CD8-positive, alpha-beta memory T cell (primary cell): ENCODE measurements at regions of chr1 and their contacts with region 1.

Region 1: GRCh38 chr1:206982216-206982615 is 12.0 kb upstream of the FCAMR start:
- DNase-seq: peak; percentile 32 to 65 (median 39)
- H3K4me3 ChIP-seq: no peak overlapping the region
- H3K4me3 Mint-ChIP-seq: no peak overlapping the region
- H3K27ac ChIP-seq: no peak overlapping the region
- H3K27ac Mint-ChIP-seq: no peak overlapping the region
- H3K4me1 ChIP-seq: no peaks in the 10 kb centered on the region
- H3K4me1 Mint-ChIP-seq: no peaks in the 10 kb centered on the region
- H3K27me3 ChIP-seq: no peaks in the 10 kb centered on the region
- H3K27me3 Mint-ChIP-seq: peaks cover 20 to 25% of the 10 kb centered on the region in 2 donors

Region 2: GRCh38 chr1:206635080-206635977 is 346.9 kb before region 1 on chr1 and contains the start of gene DYRK3:
- CTCF ChIA-PET with region 1: interaction called, 13 read pairs
- POLR2A ChIA-PET with region 1: no interaction called
- DNase-seq: peak; percentile 84 to 94 (median 87)
- H3K4me3 ChIP-seq: peak within 1 kb of the TSS; percentile 62
- H3K4me3 Mint-ChIP-seq: peak within 1 kb of the TSS; percentile 85 to 96 (median 89)
- H3K27ac ChIP-seq: peak within 1 kb of the TSS; percentile 59
- H3K27ac Mint-ChIP-seq: peak within 1 kb of the TSS; percentile 61 to 95 (median 90)
- H3K4me1 ChIP-seq: peaks cover 13% of the 10 kb centered on the region
- H3K4me1 Mint-ChIP-seq: peaks cover 13 to 27% (median 18%) of the 10 kb centered on the region in 3 donors
- H3K27me3 ChIP-seq: no peaks in the 10 kb centered on the region
- H3K27me3 Mint-ChIP-seq: peaks cover 10 to 13% of the 10 kb centered on the region in 2 donors
- total RNA-seq, gene DYRK3: 11.0 to 11.7 TPM

Region 3: DNA sequence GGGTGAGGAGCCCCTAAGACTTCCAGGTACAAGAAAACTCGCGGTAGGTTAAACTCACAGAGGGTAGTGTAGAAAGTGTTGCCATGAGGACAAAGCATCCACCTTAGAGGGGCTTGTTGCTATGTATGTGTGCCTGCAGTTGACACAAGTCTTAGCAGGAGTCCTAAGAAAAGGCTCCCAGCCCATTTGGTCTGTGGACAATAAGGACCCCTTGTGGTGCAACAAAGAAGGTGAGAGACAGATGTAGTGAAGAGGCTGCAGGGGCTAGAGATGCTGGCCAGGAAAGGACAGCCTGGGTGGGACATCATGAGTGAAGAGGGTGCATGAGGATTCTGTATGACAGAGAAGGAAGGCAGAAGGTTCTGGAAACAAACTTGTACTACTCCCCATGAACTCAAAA is 173.6 kb before region 1 on chr1:
- CTCF ChIA-PET with region 1: interaction called, 10 read pairs
- POLR2A ChIA-PET with region 1: no interaction called
- DNase-seq: peak; percentile 7 to 69 (median 67)
- H3K4me3 ChIP-seq: no peak overlapping the region
- H3K4me3 Mint-ChIP-seq: no peak overlapping the region
- H3K27ac ChIP-seq: no peak overlapping the region
- H3K27ac Mint-ChIP-seq: peak overlapping the region in 7 of 8 donors; percentile 9 to 85 (median 79)
- H3K4me1 ChIP-seq: peaks cover 38% of the 10 kb centered on the region
- H3K4me1 Mint-ChIP-seq: peaks cover 31 to 46% (median 43%) of the 10 kb centered on the region in 3 donors
- H3K27me3 ChIP-seq: no peaks in the 10 kb centered on the region
- H3K27me3 Mint-ChIP-seq: peaks cover 0 to 1% of the 10 kb centered on the region in 2 donors

Region 4: DNA sequence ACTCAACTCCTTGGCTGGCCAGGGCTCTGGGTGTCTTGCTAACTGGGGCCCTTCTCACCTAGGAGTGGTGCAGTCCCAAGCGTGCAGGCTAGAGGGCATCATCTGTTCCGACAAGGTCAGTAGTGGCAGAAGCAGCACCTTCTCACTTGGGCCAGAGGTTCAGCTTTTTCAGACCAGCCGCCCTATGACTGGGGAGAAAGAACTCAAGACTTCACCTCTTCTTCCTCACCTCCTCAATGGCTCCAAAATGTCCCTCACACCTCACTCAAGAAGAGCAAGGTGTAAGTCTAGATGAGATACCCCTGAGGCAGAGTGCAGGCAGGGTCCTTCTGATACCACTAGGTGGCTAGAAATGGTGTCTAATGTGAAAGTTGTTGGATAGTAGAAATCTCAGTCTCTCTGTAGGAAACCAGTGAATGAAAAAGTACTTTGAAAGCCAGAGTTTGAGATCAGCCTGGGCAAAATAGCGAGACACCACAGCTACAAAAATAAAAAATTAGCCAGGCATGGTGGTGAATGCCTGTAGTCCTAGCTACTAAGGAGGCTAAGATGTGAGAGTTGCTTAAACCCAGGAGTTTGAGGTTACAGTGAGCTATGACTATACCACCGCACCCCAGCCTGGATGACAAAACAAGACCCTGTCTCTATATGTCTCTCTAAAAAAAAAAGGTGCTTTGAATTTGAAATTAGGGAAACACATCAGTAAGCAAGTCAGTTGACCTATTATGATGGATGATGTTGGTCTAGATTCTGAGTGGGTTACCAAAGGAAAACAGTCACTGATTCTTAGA is 125.3 kb before region 1 on chr1:
- CTCF ChIA-PET with region 1: interaction called, 15 read pairs
- POLR2A ChIA-PET with region 1: no interaction called
- DNase-seq: peak in 1 of 5 donors; percentile 28
- H3K4me3 ChIP-seq: no peak overlapping the region
- H3K4me3 Mint-ChIP-seq: no peak overlapping the region
- H3K27ac ChIP-seq: no peak overlapping the region
- H3K27ac Mint-ChIP-seq: peak overlapping the region in 2 of 8 donors; percentile 13 to 14
- H3K4me1 ChIP-seq: peaks cover 9% of the 10 kb centered on the region
- H3K4me1 Mint-ChIP-seq: peaks cover 3 to 5% (median 3%) of the 10 kb centered on the region in 3 donors
- H3K27me3 ChIP-seq: no peaks in the 10 kb centered on the region
- H3K27me3 Mint-ChIP-seq: peaks cover 11 to 15% of the 10 kb centered on the region in 2 donors

Region 5: GRCh38 chr1:206865013-206865671 is 117.1 kb before region 1 on chr1 and contains the start of gene IL20:
- CTCF ChIA-PET with region 1: interaction called, 10 read pairs
- POLR2A ChIA-PET with region 1: no interaction called
- DNase-seq: peak; percentile 67 to 87 (median 79)
- H3K4me3 ChIP-seq: no peak within 1 kb of the TSS
- H3K4me3 Mint-ChIP-seq: no peak within 1 kb of the TSS
- H3K27ac ChIP-seq: no peak within 1 kb of the TSS
- H3K27ac Mint-ChIP-seq: no peak within 1 kb of the TSS
- H3K4me1 ChIP-seq: no peaks in the 10 kb centered on the region
- H3K4me1 Mint-ChIP-seq: peaks cover 0 to 5% (median 2%) of the 10 kb centered on the region in 3 donors
- H3K27me3 ChIP-seq: no peaks in the 10 kb centered on the region
- H3K27me3 Mint-ChIP-seq: peaks cover 17 to 25% of the 10 kb centered on the region in 2 donors
- total RNA-seq, gene IL20: not detected

Region 6: DNA sequence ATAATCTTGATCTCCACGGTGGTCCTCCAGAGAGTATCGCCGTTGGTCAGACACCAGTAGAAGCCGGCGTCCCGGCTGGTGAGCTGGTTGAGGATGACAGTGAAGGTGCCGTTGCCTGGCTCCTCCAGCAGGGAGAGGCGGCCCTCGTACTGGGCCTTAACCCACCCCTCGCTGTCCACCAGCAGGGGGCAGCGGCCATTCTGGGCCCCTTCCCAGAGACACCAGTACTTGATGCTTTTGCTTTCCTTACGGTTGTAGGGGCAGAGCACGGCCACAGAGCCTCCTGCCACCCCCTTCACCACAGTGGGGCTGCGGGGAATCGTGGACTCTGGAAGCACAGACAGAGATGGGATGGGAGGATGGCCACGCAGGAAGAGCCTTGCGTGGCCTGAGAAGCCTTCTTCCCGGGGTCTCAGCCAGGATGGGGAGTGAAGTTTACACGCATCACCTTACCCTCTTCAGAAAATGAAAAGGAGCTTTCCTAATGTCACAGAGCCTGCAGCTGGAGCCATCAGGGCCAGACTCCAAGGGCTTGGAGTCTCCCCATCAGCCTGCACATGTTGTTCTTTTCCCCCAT is 46.6 kb before region 1 on chr1:
- CTCF ChIA-PET with region 1: interaction called, 16 read pairs
- POLR2A ChIA-PET with region 1: no interaction called
- DNase-seq: peak in 3 of 5 donors; percentile 13 to 49 (median 18)
- H3K4me3 ChIP-seq: no peak overlapping the region
- H3K4me3 Mint-ChIP-seq: no peak overlapping the region
- H3K27ac ChIP-seq: no peak overlapping the region
- H3K27ac Mint-ChIP-seq: no peak overlapping the region
- H3K4me1 ChIP-seq: peaks cover 16% of the 10 kb centered on the region
- H3K4me1 Mint-ChIP-seq: peaks cover 18 to 25% (median 24%) of the 10 kb centered on the region in 3 donors
- H3K27me3 ChIP-seq: no peaks in the 10 kb centered on the region
- H3K27me3 Mint-ChIP-seq: peaks cover 0 to 4% of the 10 kb centered on the region in 2 donors

Region 7: DNA sequence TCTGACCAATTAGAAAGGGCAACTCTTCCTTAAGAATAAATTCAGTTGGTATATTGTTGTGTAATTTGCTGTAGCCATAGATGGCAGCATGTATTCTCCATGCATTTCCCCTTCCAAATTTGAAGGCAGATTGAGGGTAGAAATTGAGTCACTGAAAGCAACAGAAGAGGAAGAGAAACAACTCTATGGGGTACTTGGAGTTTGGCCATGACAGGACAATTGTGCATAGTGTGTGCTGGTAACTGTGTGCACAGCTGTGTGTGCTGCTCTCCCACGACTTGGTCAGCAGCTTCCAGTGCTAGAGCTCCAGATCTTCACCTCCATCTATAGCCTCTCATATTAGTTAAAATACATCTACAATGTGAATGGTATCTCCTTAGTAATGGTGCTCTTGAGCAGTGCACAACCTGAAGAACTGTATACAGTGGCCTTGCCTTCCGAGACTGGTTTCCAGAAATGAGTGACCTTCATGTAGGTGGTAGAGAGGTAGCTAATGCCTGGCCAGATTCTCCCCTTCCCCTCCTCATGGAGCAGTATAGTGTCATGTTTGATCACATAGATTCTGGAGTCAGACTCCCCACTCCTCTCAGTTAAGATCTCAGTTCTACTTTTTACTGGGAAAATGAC is 11.1 kb before region 1 on chr1:
- CTCF ChIA-PET with region 1: interaction called, 23 read pairs
- POLR2A ChIA-PET with region 1: no interaction called
- DNase-seq: no peak
- H3K4me3 ChIP-seq: no peak overlapping the region
- H3K4me3 Mint-ChIP-seq: no peak overlapping the region
- H3K27ac ChIP-seq: no peak overlapping the region
- H3K27ac Mint-ChIP-seq: no peak overlapping the region
- H3K4me1 ChIP-seq: peaks cover 12% of the 10 kb centered on the region
- H3K4me1 Mint-ChIP-seq: peaks cover 9 to 15% (median 13%) of the 10 kb centered on the region in 3 donors
- H3K27me3 ChIP-seq: no peaks in the 10 kb centered on the region
- H3K27me3 Mint-ChIP-seq: peaks cover 9 to 23% of the 10 kb centered on the region in 2 donors